OCI-LY7 (cell line): ENCODE measurements at regions of chr10 and their contacts with region 1.

Region 1: GRCh38 chr10:92787557-92788152 is 60.7 kb upstream of the EXOC6 start:
- DNase-seq: peak; percentile 84
- H3K4me3 ChIP-seq: peak overlapping the region; percentile 13
- H3K27ac ChIP-seq: peak overlapping the region; percentile 66
- H3K4me1 ChIP-seq: peaks cover 49% of the 10 kb centered on the region
- CTCF ChIP-seq: peak; percentile 47; the same call in 1 of the 2 replicates

Region 2: DNA sequence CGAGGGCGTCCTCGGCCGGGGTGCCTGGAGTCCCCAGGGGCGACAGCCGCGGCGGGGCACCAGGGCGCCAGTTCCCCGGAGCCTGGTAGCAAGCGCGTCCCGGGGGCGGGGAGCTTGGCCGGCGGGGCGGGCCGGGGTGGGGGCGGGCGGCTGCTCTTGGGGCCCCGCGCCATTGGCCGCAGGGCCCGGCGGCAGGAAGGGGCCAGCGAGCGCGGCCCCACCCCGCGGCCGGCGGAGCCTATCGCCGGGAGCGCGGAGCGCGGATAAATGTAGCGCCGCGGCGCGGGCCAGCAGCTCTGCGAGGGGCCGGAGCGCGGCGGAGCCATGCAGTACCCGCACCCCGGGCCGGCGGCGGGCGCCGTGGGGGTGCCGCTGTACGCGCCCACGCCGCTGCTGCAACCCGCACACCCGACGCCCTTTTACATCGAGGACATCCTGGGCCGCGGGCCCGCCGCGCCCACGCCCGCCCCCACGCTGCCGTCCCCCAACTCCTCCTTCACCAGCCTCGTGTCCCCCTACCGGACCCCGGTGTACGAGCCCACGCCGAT is 97.9 kb before region 1 on chr10 and contains the start of gene HHEX:
- CTCF ChIA-PET with region 1: no interaction called
- POLR2A ChIA-PET with region 1: no interaction called
- intact Hi-C with region 1: loop called (anchors 5 kb)
- DNase-seq: peak; percentile 74
- H3K4me3 ChIP-seq: peak within 1 kb of the TSS; percentile 62
- H3K27ac ChIP-seq: no peak within 1 kb of the TSS
- H3K4me1 ChIP-seq: peaks cover 33% of the 10 kb centered on the region
- CTCF ChIP-seq: no peak
- total RNA-seq, gene HHEX: 2.1 and 2.8 TPM in 2 replicates

Region 3: DNA sequence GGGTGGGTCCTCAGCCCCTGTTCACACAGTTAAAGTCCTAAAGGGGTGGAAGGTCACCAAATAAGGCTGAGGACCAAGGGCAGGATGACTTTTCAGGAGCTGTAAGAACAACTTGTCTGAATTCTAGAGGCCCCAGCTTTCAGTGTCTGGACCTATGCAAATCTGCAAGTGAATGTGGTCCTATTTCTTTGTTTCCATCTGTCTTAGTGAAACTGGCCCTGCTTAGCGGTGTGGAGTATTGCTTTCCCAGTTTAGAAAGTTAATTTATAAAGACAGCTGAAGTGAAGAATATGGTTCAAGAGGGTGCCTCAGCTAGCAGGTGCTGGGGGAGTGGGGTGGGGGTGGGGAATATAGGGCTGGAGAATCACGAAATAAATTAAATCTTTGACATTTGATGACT is 57.8 kb before region 1 on chr10:
- CTCF ChIA-PET with region 1: interaction called, 3 read pairs
- POLR2A ChIA-PET with region 1: interaction called, 6 read pairs
- intact Hi-C with region 1: loop called (anchors 1 kb)
- DNase-seq: peak; percentile 90
- H3K4me3 ChIP-seq: peak overlapping the region; percentile 30
- H3K27ac ChIP-seq: peak overlapping the region; percentile 79
- H3K4me1 ChIP-seq: peaks cover 76% of the 10 kb centered on the region
- CTCF ChIP-seq: no peak

Region 4: DNA sequence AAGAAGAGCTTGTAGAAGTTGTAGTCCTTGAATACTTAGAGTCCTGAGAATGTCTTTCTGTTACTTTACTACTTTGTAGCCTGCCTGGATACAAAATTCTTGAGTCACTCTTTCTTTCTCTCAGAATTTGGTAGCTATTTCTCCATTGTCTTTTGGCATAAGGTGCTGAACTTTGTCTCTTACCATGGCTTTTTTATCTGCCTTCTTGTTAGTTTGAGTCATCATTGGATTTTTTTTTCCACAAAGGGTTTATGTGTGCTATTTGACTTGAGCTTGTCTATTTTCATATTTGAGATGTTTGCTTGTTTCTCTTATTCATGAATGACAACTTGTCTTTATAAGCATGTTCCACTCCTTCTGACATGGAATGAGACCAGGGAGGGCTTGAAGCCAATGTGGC is 13.9 kb before region 1 on chr10:
- CTCF ChIA-PET with region 1: no interaction called
- POLR2A ChIA-PET with region 1: interaction called, 11 read pairs
- intact Hi-C with region 1: no loop called
- DNase-seq: no peak
- H3K4me3 ChIP-seq: no peak overlapping the region
- H3K27ac ChIP-seq: no peak overlapping the region
- H3K4me1 ChIP-seq: no peaks in the 10 kb centered on the region
- CTCF ChIP-seq: no peak

Region 5: GRCh38 chr10:92822964-92823363 is 35.3 kb after region 1 on chr10:
- CTCF ChIA-PET with region 1: no interaction called
- POLR2A ChIA-PET with region 1: no interaction called
- intact Hi-C with region 1: no loop called
- DNase-seq: peak; percentile 49
- H3K4me3 ChIP-seq: no peak overlapping the region
- H3K27ac ChIP-seq: no peak overlapping the region
- H3K4me1 ChIP-seq: peaks cover 9% of the 10 kb centered on the region
- CTCF ChIP-seq: peak; percentile 75